Transverse colon (tissue), 4 donors: ENCODE measurements at regions of chr12 and their contacts with region 1.

Region 1: GRCh38 chr12:80406253-80406652 is 37.8 kb upstream of the PTPRQ start:
- DNase-seq: no peak
- H3K4me3 ChIP-seq: no peak overlapping the region
- H3K27ac ChIP-seq: no peak overlapping the region
- H3K4me1 ChIP-seq: no peaks in the 10 kb centered on the region
- H3K27me3 ChIP-seq: no peaks in the 10 kb centered on the region
- CTCF ChIP-seq: no peak
- EP300 ChIP-seq: no peak
- POLR2A ChIP-seq: no peak

Region 2: DNA sequence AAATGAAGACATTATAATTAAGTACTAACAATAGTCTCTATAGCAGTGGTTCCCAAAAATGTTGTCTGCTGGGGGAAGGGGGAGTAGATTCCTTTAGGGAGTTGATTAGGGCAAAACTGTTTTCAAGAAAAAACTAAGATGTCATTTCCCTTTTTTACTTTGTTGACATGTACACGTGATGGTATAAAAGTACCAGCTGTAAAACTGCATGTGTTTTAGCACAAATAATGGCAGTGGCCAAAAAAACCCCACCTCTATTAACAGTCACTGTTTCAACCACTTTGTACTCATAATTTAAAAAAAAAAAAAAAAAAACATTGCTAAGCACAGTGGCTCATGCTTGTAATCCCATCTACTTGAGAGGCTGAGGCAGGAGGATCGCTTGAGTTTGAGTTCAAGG is 533.1 kb before region 1 on chr12:
- in situ Hi-C with region 1: no loop called
- intact Hi-C with region 1: no loop called
- DNase-seq: no peak
- H3K4me3 ChIP-seq: no peak overlapping the region
- H3K27ac ChIP-seq: no peak overlapping the region
- H3K4me1 ChIP-seq: peaks cover 0 to 55% (median 9%) of the 10 kb centered on the region in 4 donors
- H3K27me3 ChIP-seq: no peaks in the 10 kb centered on the region
- CTCF ChIP-seq: no peak
- EP300 ChIP-seq: no peak
- POLR2A ChIP-seq: no peak

Region 3: DNA sequence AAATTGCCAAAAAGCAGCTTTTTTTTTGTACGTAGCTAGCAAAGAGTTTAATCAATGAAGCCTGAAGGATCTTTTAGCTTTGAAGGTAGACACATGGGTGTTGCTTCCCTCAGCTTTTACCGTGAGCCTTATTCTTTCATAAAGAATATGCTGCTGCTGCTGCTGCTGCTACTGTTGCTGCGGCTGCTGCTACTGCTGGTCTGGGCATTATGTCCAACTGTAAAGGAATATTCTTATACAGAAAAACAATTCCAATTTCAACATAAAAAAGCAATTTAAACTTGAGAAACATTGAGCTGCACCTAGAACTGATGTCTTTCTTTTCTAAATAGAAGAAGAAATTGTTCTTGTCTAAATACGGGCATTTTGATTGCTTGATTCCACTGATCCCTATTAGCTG is 432.5 kb before region 1 on chr12:
- in situ Hi-C with region 1: no loop called
- intact Hi-C with region 1: loop called (anchors 5 kb)
- DNase-seq: no peak
- H3K4me3 ChIP-seq: no peak overlapping the region
- H3K27ac ChIP-seq: peak overlapping the region in 1 of 4 donors; percentile 38
- H3K4me1 ChIP-seq: peaks cover 0 to 4% (median 0%) of the 10 kb centered on the region in 4 donors
- H3K27me3 ChIP-seq: no peaks in the 10 kb centered on the region
- CTCF ChIP-seq: no peak
- EP300 ChIP-seq: no peak
- POLR2A ChIP-seq: no peak

Region 4: GRCh38 chr12:80343832-80344231 is 62.4 kb before region 1 on chr12:
- in situ Hi-C with region 1: no loop called
- intact Hi-C with region 1: loop called (anchors 2 kb)
- DNase-seq: no peak
- H3K4me3 ChIP-seq: no peak overlapping the region
- H3K27ac ChIP-seq: no peak overlapping the region
- H3K4me1 ChIP-seq: no peaks in the 10 kb centered on the region
- H3K27me3 ChIP-seq: no peaks in the 10 kb centered on the region
- CTCF ChIP-seq: no peak
- EP300 ChIP-seq: no peak
- POLR2A ChIP-seq: no peak